Activated CD4-positive, alpha-beta T cell treated with anti-CD3 and anti-CD28 coated beads for 36 hours (primary cell): ENCODE measurements at regions of chr7 and their contacts with region 1.

Region 1: GRCh38 chr7:142535123-142535779 is 214.0 kb upstream of the PRSS1 start:
- DNase-seq: peak; percentile 90
- ATAC-seq: peak; percentile 87
- H3K4me3 Mint-ChIP-seq: peak overlapping the region; percentile 63
- H3K27ac Mint-ChIP-seq: peak overlapping the region; percentile 77
- H3K4me1 Mint-ChIP-seq: peaks cover 30% of the 10 kb centered on the region
- H3K27me3 Mint-ChIP-seq: no peaks in the 10 kb centered on the region

Region 2: GRCh38 chr7:142523821-142524460 is 11.3 kb before region 1 on chr7:
- CTCF ChIA-PET with region 1: interaction called, 24 read pairs
- POLR2A ChIA-PET with region 1: no interaction called
- intact Hi-C with region 1: no loop called
- DNase-seq: no peak
- ATAC-seq: no peak
- H3K4me3 Mint-ChIP-seq: no peak overlapping the region
- H3K27ac Mint-ChIP-seq: no peak overlapping the region
- H3K4me1 Mint-ChIP-seq: peaks cover 16% of the 10 kb centered on the region
- H3K27me3 Mint-ChIP-seq: no peaks in the 10 kb centered on the region

Region 3: DNA sequence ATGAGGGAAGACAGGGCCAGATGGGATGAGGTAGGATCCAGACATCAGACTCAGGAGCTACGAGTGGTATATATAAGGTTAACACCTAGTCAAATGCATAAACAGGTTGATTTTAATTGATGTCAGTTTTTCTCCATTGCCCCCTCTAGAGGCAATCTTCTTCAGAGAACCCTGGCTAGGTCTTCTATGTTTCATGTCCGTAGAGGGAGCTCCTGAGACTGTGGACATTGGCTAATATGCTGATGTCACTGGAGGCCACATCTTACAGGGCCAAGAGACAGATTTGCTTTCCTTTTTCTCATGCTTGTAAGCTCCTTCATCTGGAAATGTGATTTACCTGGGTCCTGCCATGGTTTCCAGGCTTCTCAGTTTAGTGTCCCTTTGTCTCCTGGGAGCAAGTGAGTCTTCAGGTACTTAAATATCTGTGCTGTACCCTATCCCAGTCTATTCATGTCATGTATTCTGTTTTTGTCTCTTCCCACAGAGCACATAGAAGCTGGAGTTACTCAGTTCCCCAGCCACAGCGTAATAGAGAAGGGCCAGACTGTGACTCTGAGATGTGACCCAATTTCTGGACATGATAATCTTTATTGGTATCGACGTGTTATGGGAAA is 52.4 kb after region 1 on chr7:
- CTCF ChIA-PET with region 1: interaction called, 20 read pairs
- POLR2A ChIA-PET with region 1: no interaction called
- intact Hi-C with region 1: loop called (anchors 1 to 5 kb)
- DNase-seq: peak; percentile 15
- ATAC-seq: peak; percentile 64
- H3K4me3 Mint-ChIP-seq: no peak overlapping the region
- H3K27ac Mint-ChIP-seq: no peak overlapping the region
- H3K4me1 Mint-ChIP-seq: peaks cover 10% of the 10 kb centered on the region
- H3K27me3 Mint-ChIP-seq: no peaks in the 10 kb centered on the region

Region 4: DNA sequence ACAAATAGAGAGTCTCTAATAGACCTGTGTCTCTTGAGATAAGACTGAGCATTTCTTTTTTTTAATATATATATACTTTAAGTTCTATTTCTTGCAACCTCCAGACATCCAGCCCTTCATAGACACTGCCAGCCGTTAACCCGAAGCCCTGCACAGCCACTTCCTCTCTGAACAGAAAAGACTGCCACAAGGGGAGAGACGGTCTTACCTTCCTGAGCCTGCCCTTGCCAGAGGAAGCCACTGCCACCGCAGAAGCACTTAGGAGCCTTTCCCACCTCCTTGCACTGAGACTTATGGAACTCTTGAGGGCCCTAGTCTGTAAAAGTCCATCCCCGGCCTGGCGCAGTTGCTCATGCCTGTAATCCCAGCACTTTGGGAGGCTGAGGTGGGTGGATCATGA is 182.2 kb after region 1 on chr7:
- CTCF ChIA-PET with region 1: no interaction called
- POLR2A ChIA-PET with region 1: no interaction called
- intact Hi-C with region 1: loop called in 1 of 2 experiments (anchors 5 kb)
- DNase-seq: no peak
- ATAC-seq: no peak
- H3K4me3 Mint-ChIP-seq: peak overlapping the region; percentile 50
- H3K27ac Mint-ChIP-seq: peak overlapping the region; percentile 25
- H3K4me1 Mint-ChIP-seq: peaks cover 43% of the 10 kb centered on the region
- H3K27me3 Mint-ChIP-seq: no peaks in the 10 kb centered on the region

Region 5: DNA sequence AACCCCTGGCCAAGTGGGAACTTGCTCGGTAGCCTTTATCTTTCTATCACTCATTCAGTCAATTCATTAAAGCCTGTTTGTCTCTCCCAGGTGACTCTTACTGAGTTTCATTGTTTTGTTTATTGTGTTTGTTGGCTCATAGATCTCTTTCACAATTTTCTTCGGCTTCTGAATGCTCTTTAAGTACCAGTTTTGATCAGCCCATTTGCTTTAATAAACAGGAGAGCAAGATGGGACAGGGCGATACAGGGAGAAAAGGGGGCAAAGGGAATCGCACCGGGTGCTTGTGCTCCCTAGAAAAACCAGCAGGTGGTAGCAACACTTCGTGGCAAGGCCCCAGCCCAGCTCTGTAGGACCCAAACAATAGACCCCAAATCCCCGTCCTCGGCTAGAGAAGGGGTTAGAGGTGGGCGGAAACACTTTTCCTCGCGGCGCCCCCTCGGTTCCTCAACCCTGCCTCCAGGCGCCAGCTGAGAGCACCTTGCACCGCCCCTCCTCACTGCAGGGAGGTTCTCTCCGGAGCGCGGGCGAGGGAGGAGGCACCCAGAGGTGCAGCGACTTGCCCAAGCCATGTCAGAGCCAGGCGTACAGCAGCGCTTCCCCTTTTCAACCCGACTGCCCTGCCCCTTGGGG is 318.6 kb after region 1 on chr7:
- CTCF ChIA-PET with region 1: interaction called, 3 read pairs
- POLR2A ChIA-PET with region 1: no interaction called
- intact Hi-C with region 1: loop called in 1 of 2 experiments (anchors 1 kb)
- DNase-seq: peak; percentile 85
- ATAC-seq: peak; percentile 88
- H3K4me3 Mint-ChIP-seq: peak overlapping the region; percentile 96
- H3K27ac Mint-ChIP-seq: peak overlapping the region; percentile 78
- H3K4me1 Mint-ChIP-seq: peaks cover 27% of the 10 kb centered on the region
- H3K27me3 Mint-ChIP-seq: peaks cover 2% of the 10 kb centered on the region